Activated B cell treated with CpG ODN at 0.5 μM for 24 hours (primary cell): ENCODE measurements at regions of chr19 and their contacts with region 1.

Region 1: GRCh38 chr19:18097217-18097992 is at the start of gene MAST3:
- DNase-seq: peak; percentile 95
- ATAC-seq: peak; percentile 72
- H3K4me3 Mint-ChIP-seq: peak within 1 kb of the TSS; percentile 95
- H3K27ac Mint-ChIP-seq: peak within 1 kb of the TSS; percentile 96
- H3K4me1 Mint-ChIP-seq: peaks cover 43% of the 10 kb centered on the region
- H3K27me3 Mint-ChIP-seq: no peaks in the 10 kb centered on the region
- CTCF ChIP-seq: no peak
- total RNA-seq, gene MAST3: 44.3 and 48.6 TPM in 2 replicates

Region 2: DNA sequence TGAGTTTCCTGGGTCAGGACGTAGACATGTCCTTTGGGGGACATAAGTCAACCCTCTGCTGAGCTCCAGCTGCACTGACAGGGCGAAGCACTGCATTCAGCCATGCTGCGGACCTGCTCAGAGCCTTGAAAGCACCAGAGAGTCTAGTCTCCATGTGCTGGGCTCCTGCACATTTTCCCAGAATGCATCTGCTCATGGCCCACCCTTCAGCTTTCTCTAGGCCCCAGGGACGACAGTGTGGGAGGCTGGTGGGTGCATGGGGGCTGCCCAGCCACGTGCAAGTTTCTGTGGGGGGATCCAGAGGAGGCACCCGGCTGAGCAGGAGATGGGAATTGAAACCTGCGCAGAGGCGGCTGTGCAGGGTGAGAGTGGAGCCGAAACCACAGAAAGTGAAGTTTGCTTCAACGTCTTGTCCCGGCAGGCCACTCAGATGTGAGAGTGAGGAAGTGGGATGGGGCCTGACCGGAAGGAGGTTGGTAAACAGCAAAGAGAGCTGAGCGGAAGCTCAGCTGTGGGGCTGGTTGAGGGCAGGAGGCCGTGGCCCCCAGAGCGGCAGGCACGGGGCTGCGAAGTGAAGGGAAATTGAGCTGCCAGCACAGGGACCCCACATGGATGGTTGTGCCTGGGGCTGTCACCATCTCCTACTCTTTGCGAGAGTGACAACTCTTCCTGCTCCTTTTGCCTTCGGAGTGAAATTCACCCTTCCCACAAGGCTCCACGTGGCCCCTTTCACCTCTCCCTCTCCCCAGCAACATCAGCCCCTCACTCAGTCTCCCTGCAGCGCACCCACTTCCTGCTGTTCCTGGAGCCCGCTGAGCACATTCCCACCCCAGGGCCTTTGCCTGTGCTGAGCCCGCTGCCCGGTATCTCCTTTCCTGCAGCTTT is 574.2 kb before region 1 on chr19:
- CTCF ChIA-PET with region 1: no interaction called
- POLR2A ChIA-PET with region 1: no interaction called
- intact Hi-C with region 1: loop called (anchors 10 kb)
- DNase-seq: peak; percentile 79
- ATAC-seq: peak; percentile 77
- H3K4me3 Mint-ChIP-seq: peak overlapping the region; percentile 76
- H3K27ac Mint-ChIP-seq: peak overlapping the region; percentile 94
- H3K4me1 Mint-ChIP-seq: peaks cover 67% of the 10 kb centered on the region
- H3K27me3 Mint-ChIP-seq: no peaks in the 10 kb centered on the region
- CTCF ChIP-seq: no peak

Region 3: DNA sequence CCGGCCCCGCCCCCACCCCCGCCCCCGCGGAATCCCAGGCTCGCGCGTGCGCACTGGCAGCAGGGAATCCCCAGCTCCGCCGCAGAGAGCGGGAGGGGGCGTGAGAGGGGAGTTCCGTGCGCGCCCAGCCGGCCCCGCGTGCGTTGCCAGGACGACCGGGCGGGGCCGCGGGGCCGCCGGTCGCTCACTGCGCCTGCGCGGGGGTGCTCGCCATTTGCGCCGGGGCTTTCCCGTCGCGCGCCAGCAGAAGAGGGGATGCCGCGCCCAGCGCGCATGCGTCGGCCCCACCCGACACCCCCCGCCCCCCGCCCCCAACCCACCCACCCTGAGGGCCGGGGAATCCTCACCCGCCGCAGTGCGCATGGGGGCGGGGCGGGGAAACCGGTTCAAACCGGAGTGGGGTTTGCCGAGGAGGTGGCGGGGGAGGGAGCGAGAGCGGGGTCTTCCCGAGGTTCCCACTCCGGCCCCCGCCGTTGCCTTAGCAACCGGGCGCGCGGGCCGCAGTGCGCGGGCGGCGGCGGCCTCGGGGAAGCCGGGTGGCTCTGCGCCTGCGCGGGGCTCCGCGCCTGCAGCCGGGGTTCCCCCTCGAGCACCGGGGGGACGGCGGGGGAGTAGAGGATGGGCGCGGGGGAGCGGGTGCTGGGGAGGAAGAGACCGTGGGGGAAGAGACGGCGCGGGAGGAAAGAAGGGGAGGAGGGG is 149.4 kb before region 1 on chr19:
- CTCF ChIA-PET with region 1: no interaction called
- POLR2A ChIA-PET with region 1: interaction called, 8 read pairs
- intact Hi-C with region 1: loop called (anchors 5 kb)
- DNase-seq: peak; percentile 98
- ATAC-seq: peak; percentile 63
- H3K4me3 Mint-ChIP-seq: peak overlapping the region; percentile 74
- H3K27ac Mint-ChIP-seq: no peak overlapping the region
- H3K4me1 Mint-ChIP-seq: peaks cover 59% of the 10 kb centered on the region
- H3K27me3 Mint-ChIP-seq: peaks cover 12% of the 10 kb centered on the region
- CTCF ChIP-seq: no peak

Region 4: DNA sequence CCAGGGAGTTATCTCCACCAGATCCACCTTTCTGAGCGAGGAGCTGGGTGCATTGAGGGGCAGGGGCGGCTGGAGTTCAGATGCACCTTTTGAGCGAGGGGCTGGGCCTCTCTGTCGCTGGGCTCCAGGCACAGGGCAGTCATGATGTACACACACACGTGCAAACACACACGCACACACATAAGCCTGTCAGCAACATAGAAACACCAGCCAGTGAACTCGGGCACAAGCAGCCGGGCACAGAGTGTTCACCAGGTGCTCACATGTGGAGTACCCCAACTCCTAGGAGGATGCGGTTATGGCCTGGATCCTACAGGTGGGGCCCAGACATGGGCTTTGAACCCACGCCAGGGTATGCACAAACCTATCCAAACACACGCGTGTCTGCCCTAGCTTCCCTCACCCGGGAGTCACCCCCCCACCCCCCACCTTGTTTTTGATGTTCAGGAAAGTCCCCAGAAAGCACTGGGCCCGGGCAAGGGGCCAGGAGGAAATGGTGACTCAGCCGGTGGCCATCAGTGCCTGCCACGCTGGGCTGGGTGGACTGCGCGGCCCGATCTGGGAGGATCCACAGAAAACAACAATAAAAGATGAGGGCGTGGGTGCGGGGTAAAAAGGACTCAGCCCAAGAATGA is 76.2 kb before region 1 on chr19:
- CTCF ChIA-PET with region 1: no interaction called
- POLR2A ChIA-PET with region 1: interaction called, 34 read pairs
- intact Hi-C with region 1: loop called (anchors 5 kb)
- DNase-seq: peak; percentile 68
- ATAC-seq: peak; percentile 23
- H3K4me3 Mint-ChIP-seq: peak overlapping the region; percentile 69
- H3K27ac Mint-ChIP-seq: peak overlapping the region; percentile 97
- H3K4me1 Mint-ChIP-seq: peaks cover 80% of the 10 kb centered on the region
- H3K27me3 Mint-ChIP-seq: no peaks in the 10 kb centered on the region
- CTCF ChIP-seq: no peak

Region 5: DNA sequence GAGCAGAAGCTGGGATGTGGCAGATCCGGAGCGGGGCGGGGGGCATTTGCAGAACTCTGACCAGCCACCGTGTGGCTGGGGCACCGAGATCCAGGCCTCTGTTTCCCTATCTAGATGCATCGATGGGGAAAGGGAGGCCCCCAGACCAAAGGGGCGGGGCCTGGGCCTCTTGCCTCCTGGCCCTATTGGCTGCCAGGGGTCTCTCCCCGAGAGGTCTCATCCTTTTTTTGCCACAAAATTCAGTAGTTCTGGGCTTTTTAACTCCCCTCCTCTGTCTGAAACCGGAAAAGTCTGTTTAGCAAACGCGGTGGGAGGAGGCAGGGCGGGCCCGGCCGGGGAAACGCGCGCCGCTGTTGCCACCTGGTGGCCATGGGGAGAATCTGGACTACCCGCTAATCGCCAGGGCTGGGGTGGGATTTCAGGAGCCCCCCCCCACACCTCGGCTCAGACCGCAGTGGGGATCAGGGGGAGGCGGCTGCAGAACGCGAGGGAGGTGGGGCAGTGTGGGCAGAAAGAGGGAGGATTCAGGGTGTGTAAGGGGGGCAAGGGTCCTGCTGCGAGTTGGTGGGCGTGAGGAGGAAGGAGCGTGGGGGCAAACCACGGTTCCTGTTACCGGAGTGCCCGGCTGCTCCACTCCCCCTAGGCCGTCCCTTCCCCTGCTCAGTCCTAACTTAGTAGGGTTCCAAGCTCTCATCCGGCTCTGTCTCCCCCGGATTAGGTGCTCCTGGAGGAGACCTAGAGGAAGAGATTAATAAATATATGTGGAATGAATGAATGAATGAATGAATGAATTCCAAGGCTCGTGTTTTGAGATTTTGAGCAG is 39.0 kb before region 1 on chr19:
- CTCF ChIA-PET with region 1: no interaction called
- POLR2A ChIA-PET with region 1: interaction called, 12 read pairs
- intact Hi-C with region 1: loop called (anchors 2 kb)
- DNase-seq: peak; percentile 81
- ATAC-seq: peak; percentile 93
- H3K4me3 Mint-ChIP-seq: peak overlapping the region; percentile 58
- H3K27ac Mint-ChIP-seq: peak overlapping the region; percentile 76
- H3K4me1 Mint-ChIP-seq: peaks cover 21% of the 10 kb centered on the region
- H3K27me3 Mint-ChIP-seq: no peaks in the 10 kb centered on the region
- CTCF ChIP-seq: peak; percentile 88

Region 6: GRCh38 chr19:18117692-18118378 is 20.4 kb after region 1 on chr19:
- CTCF ChIA-PET with region 1: interaction called, 3 read pairs
- POLR2A ChIA-PET with region 1: interaction called, 19 read pairs
- intact Hi-C with region 1: loop called (anchors 2 kb)
- DNase-seq: peak; percentile 98
- ATAC-seq: peak; percentile 93
- H3K4me3 Mint-ChIP-seq: peak overlapping the region; percentile 75
- H3K27ac Mint-ChIP-seq: peak overlapping the region; percentile 77
- H3K4me1 Mint-ChIP-seq: peaks cover 40% of the 10 kb centered on the region
- H3K27me3 Mint-ChIP-seq: no peaks in the 10 kb centered on the region
- CTCF ChIP-seq: no peak

Region 7: DNA sequence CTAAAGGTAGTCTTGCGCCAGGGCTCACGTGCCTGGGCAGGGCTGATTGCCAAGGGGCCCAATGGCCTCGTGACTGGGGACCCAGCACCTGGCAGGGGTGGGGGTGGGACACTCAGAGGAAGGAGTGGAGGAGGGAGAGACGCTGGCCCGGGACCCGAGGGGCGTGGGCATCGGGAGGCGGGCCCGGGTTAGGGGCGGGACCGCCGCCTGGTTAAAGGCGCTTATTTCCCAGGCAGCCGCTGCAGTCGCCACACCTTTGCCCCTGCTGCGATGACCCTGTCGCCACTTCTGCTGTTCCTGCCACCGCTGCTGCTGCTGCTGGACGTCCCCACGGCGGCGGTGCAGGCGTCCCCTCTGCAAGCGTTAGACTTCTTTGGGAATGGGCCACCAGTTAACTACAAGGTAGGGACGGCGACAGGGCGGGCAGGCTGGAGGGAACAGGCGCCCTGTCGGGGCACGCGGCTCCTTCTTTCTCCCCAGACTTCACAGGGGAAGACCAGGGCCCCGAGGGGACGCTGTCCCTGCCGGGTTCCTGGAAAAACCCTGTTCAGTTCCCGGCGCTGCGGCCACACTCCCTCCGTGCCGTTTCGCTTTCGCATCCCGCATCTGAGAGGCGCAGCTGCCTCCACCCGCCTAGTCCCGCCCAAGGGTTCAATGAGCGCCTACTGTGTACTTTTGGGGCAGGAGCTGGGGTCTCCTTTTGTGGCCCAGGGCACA is 76.3 kb after region 1 on chr19 and contains the start of gene IFI30:
- CTCF ChIA-PET with region 1: interaction called, 3 read pairs
- POLR2A ChIA-PET with region 1: interaction called, 6 read pairs
- intact Hi-C with region 1: loop called (anchors 5 kb)
- DNase-seq: peak; percentile 85
- ATAC-seq: peak; percentile 62
- H3K4me3 Mint-ChIP-seq: peak within 1 kb of the TSS; percentile 94
- H3K27ac Mint-ChIP-seq: peak within 1 kb of the TSS; percentile 92
- H3K4me1 Mint-ChIP-seq: peaks cover 90% of the 10 kb centered on the region
- H3K27me3 Mint-ChIP-seq: no peaks in the 10 kb centered on the region
- CTCF ChIP-seq: no peak
- total RNA-seq, gene IFI30: 251 and 255 TPM in 2 replicates